ENCODE measurements at regions of chr5 and their contacts with region 1.

Region 1: DNA sequence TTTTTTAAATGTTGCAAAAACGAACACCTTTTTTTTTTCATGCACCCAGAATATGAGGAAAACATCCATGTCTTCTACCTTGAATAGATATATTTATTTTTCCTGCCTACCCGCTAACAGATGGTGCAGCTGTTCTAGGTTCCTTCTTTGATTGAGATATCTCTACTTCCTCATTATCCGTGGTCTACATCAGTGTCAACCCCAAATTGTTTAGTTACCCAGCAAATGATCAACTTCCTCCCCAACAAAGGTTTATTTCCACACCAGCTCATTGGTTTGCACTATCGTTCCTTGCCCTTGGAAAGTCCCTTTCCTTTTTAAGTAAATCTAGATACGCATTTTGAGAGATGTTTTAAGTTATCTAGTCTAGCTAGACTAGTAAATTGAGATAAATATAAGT is 166.4 kb downstream of the PRR16 start:
- DNase-seq: no peak
- H3K4me3 ChIP-seq: no peak overlapping the region
- H3K27ac ChIP-seq: no peak overlapping the region
- H3K4me1 ChIP-seq: no peaks in the 10 kb centered on the region
- H3K27me3 ChIP-seq: no peaks in the 10 kb centered on the region
- CTCF ChIP-seq: no peak
- EP300 ChIP-seq: no peak
- POLR2A ChIP-seq: no peak

Region 2: DNA sequence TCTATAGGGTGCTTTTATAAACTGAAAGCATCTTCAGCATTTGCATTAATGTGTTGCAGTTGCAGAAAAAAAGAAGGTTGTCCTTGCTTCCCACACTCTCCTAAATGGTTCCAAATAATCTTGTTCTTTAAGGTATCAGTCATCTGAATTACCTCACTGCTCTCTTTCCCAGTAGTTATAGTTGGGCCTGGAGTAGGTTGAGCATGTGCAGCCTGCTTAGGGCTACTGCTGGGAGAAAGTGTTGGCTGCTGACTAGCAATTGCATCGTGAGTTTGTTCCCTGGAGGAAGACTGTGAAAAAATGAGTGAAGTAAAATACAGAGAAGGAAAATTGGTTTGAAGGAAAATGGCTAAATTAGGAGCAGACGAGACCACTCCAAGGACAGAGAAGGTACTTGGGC is 91.9 kb before region 1 on chr5:
- intact Hi-C with region 1: no loop called
- DNase-seq: no peak
- H3K4me3 ChIP-seq: no peak overlapping the region
- H3K27ac ChIP-seq: no peak overlapping the region
- H3K4me1 ChIP-seq: no peaks in the 10 kb centered on the region
- H3K27me3 ChIP-seq: no peaks in the 10 kb centered on the region
- CTCF ChIP-seq: no peak
- EP300 ChIP-seq: no peak
- POLR2A ChIP-seq: no peak

Region 3: DNA sequence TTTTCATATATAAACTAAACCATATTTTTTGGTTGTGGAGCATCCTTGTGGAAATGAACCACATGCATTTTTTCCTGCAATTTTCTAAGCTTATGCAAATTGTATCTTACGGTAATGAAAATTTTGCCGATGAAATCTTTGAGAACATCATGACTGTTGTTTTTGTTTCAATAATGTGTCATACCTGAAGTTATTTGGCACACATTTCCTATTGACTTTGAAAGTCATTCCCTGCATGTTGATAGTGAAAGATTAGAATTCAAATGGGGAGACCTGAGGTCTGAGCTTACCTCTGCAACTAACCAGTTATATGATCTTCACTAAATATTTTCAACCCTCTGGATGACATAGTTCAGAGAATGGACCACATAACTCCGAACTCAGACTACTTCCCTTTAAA is 77.9 kb before region 1 on chr5:
- intact Hi-C with region 1: no loop called
- DNase-seq: no peak
- H3K4me3 ChIP-seq: no peak overlapping the region
- H3K27ac ChIP-seq: no peak overlapping the region
- H3K4me1 ChIP-seq: no peaks in the 10 kb centered on the region
- H3K27me3 ChIP-seq: no peaks in the 10 kb centered on the region
- CTCF ChIP-seq: no peak
- EP300 ChIP-seq: no peak
- POLR2A ChIP-seq: no peak

Region 4: GRCh38 chr5:122107016-122107415 is 1476.5 kb after region 1 on chr5:
- intact Hi-C with region 1: loop called in 1 of 4 experiments (anchors 5 kb)
- DNase-seq: no peak
- H3K4me3 ChIP-seq: no peak overlapping the region
- H3K27ac ChIP-seq: no peak overlapping the region
- H3K4me1 ChIP-seq: no peaks in the 10 kb centered on the region
- H3K27me3 ChIP-seq: no peaks in the 10 kb centered on the region
- CTCF ChIP-seq: no peak
- EP300 ChIP-seq: no peak
- POLR2A ChIP-seq: no peak

Measured in ovary (tissue), 10 donors.